HEK293T (cell line): ENCODE measurements at regions of chr2 and their contacts with region 1.

Region 1: GRCh38 chr2:70132244-70133126 is 45.2 kb downstream of the PCBP1 start:
- DNase-seq: no peak

Region 2: GRCh38 chr2:70104231-70105111 is 28.0 kb before region 1 on chr2:
- CTCF ChIA-PET with region 1: no interaction called
- POLR2A ChIA-PET with region 1: interaction called, 23 read pairs
- DNase-seq: peak; percentile 59

Region 3: DNA sequence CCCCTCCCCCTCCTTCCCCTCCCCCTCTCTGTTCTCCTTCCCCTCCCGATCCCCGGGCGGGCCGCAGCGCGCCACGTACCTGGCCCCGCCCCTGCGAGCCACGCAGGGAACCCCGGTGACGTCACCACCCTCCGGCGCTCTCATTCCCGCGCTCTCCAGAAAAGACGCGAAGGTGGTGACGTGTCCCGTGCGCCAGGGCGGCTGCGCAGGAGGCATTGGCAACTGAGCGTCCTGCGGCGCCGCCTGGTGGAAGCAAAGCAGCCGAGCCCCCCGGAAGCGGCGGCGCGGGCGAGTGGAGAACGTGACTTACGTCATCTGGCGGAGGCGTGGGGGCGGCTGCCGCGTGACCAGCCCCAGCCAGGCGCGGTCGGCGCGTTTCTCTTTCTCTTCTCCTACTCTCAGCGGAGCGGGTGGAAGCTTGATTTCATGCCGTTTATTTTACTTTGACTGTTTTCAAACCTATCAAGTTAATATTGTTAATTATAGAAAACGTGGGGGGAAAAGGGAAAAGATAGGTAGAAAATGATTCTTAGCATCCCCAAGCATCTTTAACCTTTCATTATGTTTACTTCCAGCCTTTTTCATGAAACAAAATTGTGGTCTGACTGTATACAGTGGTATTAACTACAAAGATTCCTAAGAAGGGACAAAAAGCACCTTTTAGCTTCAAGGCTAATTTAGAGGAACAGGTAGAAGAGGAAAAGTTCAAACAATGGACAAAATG is 10.3 kb after region 1 on chr2:
- CTCF ChIA-PET with region 1: no interaction called
- POLR2A ChIA-PET with region 1: interaction called, 34 read pairs
- DNase-seq: peak; percentile 98